Activated CD4-positive, alpha-beta T cell treated with anti-CD3 and anti-CD28 coated beads, Interleukin-2, amount 10 ng/mL, durations not matched to agents 7 days and 5 days (primary cell): ENCODE measurements at regions of chr13 and their contacts with region 1.

Region 1: DNA sequence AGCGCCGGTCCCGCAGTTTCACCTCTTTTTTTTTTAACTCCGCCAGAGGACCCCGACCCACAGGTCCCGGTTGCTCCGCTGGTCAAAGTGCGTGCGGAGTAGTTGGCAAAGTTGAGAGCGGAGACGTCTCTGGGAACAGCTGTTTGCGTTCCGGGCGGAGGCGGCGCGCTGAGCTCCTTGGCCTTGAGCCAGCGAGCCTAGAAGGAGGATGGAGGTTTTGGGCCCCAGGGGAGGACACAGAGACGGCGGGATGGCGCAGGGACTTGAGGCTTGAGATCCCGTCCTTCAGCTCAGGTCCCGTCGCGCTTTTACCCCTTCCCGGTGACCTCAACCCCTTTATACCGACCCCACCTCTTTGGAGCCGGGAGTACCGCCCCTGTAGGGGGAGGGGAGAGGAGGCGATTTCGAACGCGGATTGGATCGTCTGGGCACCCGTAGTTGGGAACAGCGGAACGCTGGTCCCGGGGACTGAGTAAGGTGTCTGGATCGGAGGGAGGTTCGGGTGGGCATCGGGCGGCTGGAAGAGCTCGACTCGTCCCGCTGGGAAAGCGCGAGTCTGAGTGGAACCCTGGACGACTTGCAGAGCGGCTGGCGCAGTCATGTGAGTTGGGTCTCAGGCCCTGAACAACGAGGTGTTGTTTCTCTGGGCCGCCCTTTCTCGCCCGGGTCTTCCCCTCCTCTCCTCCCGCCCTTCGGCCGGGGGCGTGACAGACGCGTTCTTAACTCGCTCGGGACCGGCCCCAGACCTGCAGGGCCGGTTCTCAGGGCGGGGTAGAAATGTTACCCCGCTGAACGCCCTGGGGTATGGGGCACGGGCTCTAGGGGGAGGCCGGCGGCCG is at the start of gene WBP4:
- DNase-seq: peak; percentile 87
- H3K4me3 Mint-ChIP-seq: peak within 1 kb of the TSS; percentile 93
- H3K27ac Mint-ChIP-seq: peak within 1 kb of the TSS; percentile 99
- H3K4me1 Mint-ChIP-seq: peaks cover 60% of the 10 kb centered on the region
- H3K27me3 Mint-ChIP-seq: peaks cover 5% of the 10 kb centered on the region
- total RNA-seq, gene WBP4: 9.8 to 12.2 TPM

Region 2: GRCh38 chr13:41040606-41041319 is 20.5 kb before region 1 on chr13:
- CTCF ChIA-PET with region 1: no interaction called
- POLR2A ChIA-PET with region 1: interaction called, 12 read pairs
- DNase-seq: no peak
- H3K4me3 Mint-ChIP-seq: no peak overlapping the region
- H3K27ac Mint-ChIP-seq: no peak overlapping the region
- H3K4me1 Mint-ChIP-seq: no peaks in the 10 kb centered on the region
- H3K27me3 Mint-ChIP-seq: no peaks in the 10 kb centered on the region